Posterior cingulate gyrus (tissue), 11 donors: ENCODE measurements at regions of chr22 and their contacts with region 1.

Region 1: DNA sequence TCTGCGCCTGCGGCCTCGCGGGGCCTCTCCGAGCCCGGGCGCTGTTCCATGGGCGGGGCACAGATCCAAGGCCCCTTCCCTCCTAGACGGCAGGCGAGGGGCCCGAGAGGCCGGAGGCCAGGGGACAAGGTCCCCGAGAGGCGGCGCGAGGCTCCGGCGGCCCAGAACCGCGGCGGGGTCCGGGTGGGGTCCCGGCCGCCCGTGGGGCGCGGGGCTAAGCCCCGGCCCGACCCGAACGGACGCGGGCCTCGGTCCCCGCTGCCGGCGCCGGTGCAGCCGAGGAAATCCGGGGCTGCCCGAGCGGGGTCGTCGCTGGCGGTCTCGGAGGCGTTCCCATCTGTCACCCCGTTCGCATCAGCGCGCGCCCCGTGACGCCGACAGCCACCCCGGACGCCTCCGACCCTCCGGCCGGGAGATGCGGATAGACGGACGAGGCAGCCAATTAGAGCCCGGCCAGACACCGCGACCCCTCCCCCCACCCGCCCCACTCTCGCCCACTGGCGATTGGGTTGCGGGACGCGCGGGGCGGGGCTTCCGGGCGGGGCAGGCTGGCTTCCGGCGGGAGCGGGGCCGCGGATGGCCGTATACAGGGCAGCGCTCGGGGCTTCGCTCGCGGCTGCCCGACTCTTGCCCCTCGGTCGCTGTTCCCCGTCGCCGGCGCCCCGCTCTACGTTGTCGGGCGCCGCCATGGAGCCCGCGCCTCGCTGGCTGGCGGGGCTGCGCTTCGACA is at the start of gene SELENOO:
- DNase-seq: peak; percentile 87 to 99 (median 94)

Region 2: GRCh38 chr22:50010676-50011446 is 189.8 kb before region 1 on chr22:
- intact Hi-C with region 1: no loop called
- DNase-seq: peak in 1 of 10 donors; percentile 67

Region 3: DNA sequence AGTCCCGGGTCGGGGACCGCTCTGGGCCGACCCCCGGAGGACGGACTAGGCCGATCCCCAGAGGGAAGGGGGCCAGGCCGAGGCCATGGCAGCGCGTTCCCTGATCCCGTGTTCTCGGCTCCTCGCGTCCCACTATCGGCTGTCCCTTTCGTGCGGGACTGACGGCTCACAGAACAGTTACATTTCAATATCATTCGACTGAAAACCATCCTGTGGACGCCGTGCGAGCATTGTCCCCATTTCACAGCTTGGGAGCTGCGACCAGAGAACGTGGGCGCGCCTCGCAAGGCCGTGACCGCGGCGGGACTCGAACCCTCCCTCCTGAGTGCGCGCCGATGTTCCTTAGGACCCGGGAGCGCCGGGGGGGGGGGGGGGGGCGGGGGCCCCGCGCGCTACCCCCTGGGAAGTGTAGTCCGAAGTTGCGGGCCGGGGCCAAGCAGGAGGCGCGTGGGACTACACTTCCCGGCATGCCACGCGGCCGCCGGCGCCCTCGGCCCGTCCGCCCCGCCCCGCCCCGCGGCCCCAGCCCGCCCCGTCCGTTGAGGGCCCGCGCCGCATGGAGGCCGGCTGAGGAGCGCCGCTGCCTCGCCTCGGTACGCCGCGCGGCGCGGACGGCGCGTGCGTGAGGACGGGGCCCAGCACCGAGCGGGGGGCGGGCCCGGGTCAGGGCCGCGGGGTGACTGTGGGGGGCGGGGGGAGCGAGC is 15.1 kb before region 1 on chr22 and contains the start of gene TRABD:
- intact Hi-C with region 1: loop called (anchors 2 kb)
- DNase-seq: peak; percentile 77 to 98 (median 86)